Activated CD4-positive, alpha-beta T cell treated with anti-CD3 and anti-CD28 coated beads, Interleukin-2, amount 10 ng/mL, durations not matched to agents 24 days and 14 days (primary cell): ENCODE measurements at regions of chr1 and their contacts with region 1.

Region 1: GRCh38 chr1:146049436-146049835 is 27.9 kb upstream of the HJV start:
- DNase-seq: peak; percentile 57
- H3K4me3 Mint-ChIP-seq: no peak overlapping the region
- H3K27ac Mint-ChIP-seq: no peak overlapping the region
- H3K4me1 Mint-ChIP-seq: peaks cover 21% of the 10 kb centered on the region
- H3K27me3 Mint-ChIP-seq: peaks cover 2% of the 10 kb centered on the region

Region 2: DNA sequence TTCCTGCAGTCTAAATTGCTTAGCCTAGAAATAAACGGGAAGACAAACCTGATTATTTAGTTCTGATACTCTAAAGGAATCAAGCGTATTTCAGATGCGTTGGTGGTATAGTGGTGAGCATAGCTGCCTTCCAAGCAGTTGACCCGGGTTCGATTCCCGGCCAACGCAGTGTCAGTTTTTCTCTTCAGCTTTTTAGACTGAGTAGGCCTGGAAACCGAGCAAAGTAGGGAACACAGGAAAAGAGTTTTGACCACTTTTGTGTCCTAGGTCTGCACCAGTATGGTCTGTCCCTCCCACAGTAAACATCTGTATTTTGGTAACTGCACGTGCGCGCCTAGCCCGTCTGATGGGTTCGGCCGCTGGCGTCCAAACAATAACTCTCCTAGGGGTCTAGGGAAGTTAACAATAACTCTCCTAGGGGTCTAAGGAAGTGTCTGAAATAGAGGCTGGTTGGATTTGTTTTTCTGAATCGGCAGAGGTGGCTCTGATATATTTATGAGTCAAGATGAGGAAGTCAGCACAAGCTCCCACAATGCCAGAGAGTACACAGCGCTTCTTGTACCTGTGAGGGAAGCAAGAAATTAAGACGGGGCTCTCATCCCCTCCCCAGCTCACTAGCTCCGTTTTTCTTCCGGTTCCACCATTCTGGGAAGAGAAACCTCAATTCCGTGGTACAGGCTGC is 12.3 kb before region 1 on chr1:
- intact Hi-C with region 1: loop called (anchors 1 kb)
- DNase-seq: peak; percentile 93
- H3K4me3 Mint-ChIP-seq: peak overlapping the region; percentile 96
- H3K27ac Mint-ChIP-seq: peak overlapping the region; percentile 97
- H3K4me1 Mint-ChIP-seq: peaks cover 46% of the 10 kb centered on the region
- H3K27me3 Mint-ChIP-seq: peaks cover 16% of the 10 kb centered on the region